ENCODE measurements at regions of chr12 and their contacts with region 1.

Region 1: DNA sequence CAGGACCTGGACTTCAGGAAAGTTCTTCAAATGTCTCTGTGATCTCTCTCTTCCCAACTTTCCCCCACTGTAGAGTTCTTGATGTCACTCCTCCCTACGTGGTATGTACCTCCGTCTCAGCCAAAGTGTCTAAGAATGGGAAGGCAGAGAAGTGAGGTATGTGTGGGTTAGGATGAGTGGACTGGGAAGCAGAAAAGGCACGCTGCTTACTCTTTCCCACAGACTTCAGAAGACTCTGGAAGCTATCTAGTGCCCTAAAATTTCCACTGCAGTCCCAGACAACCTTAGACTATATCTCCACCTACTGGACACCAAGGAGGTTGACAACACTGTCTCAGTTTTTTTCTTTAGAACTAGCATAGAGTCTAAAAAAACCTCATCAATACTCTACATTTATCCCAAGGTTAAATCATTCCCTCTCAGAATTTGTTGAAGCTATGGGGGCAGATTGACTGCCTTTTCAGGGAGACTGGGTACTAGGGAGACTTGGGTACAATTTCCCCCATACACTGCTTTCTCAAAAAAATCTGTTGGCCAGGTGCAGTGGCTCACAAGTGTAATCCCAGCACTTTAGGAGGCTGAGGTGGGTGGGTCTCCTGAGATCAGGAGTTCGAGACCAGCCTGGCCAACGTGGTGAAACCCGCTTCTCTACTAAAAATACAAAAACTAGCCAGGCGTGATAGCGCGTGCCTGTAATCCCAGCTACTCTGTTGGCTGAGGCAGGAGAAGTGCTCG is 20.6 kb upstream of the ITGA5 start:
- DNase-seq: no peak
- ATAC-seq: peak; percentile 92

Region 2: DNA sequence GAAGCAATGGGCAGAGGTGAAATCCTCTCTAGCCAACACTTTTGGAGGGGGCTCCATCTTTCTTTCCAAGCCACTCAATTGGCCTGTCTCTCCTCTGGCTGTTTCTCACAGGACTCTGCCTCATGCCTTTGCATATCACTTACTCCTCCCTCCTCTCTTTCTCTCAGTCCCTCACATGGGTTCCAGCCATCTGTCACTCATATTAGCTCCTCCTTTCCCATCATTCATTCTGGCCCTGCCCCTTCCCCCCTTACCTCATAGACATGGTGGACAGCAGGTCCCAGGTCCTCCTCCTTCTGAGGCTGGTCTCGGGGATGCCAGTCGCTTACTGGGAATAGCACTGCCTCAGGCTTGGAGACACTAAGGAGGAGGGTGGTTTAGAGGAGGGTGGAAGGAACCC is 38.6 kb before region 1 on chr12:
- intact Hi-C with region 1: loop called (anchors 2 kb)
- DNase-seq: peak; percentile 22
- ATAC-seq: no peak

Measured in Right ventricle myocardium superior (tissue), 1 donor.